ENCODE measurements at regions of chr18 and their contacts with region 1.

Region 1: GRCh38 chr18:57803103-57803969 is at the start of gene ATP8B1:
- DNase-seq: peak; percentile 87
- total RNA-seq, gene ATP8B1: 9.3 TPM

Region 2: DNA sequence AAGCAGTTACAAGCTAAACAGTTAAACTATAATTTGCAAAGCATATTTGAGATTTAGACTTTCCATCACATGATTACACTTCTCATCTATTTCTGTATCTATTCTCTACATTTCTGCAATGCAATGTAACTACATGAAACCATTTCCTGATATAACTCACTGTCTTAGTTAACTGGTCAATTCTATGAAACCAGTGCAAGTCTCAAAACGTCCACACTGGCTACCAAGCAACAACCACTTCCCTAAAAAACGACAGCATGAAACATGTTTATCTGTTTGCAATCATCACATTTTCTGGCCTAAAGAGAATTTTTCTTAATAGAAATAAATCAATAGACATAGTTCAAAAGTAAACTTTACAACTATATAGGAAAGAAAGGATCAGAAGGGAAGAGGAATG is 234.2 kb before region 1 on chr18:
- intact Hi-C with region 1: no loop called
- DNase-seq: no peak

Region 3: GRCh38 chr18:57630002-57630753 is 173.2 kb before region 1 on chr18:
- intact Hi-C with region 1: loop called (anchors 10 kb)
- DNase-seq: peak; percentile 98

Region 4: GRCh38 chr18:57666818-57667497 is 136.4 kb before region 1 on chr18:
- intact Hi-C with region 1: loop called (anchors 10 kb)
- DNase-seq: no peak

Region 5: DNA sequence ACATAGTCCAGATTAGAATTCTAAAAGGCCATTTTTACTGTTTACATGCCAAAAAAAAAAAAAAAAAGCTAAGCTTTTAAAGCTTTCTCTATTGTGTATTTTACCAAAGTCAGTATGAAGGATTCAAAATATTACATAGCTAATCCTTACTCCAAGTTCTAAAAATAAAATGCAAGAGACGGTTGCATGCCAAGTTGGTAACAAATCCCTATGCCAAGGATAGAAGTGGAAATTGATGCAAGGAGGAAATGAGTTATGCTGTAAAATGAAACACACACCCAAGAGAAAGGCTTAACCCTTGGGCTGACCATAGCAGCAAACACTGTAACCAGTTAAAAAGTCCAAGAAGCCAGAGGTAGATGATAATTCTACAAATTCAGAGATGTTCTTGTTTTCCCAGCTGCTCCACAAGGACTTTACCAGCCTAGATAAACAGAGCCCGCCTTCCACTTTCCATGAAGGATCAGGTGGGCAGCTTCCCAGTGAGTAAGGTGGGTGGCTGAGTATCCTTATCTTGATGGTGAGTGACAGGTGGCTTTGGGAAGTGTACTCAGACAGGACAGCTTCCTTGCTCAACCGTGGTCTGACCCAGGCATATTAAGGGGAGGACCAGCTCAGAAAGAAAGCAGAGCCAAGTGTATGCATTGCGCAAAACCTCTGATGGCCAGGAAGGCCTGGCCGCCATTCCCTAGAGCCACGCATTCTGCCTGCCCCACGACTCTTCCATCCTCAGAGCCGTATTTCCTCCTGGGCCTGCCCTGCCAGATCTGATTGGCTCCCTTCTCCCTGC is 34.6 kb before region 1 on chr18:
- intact Hi-C with region 1: loop called (anchors 5 kb)
- DNase-seq: no peak

Measured in cardiac septum (tissue), 1 donor.